ENCODE measurements at regions of chr11 and their contacts with region 1.

Region 1: DNA sequence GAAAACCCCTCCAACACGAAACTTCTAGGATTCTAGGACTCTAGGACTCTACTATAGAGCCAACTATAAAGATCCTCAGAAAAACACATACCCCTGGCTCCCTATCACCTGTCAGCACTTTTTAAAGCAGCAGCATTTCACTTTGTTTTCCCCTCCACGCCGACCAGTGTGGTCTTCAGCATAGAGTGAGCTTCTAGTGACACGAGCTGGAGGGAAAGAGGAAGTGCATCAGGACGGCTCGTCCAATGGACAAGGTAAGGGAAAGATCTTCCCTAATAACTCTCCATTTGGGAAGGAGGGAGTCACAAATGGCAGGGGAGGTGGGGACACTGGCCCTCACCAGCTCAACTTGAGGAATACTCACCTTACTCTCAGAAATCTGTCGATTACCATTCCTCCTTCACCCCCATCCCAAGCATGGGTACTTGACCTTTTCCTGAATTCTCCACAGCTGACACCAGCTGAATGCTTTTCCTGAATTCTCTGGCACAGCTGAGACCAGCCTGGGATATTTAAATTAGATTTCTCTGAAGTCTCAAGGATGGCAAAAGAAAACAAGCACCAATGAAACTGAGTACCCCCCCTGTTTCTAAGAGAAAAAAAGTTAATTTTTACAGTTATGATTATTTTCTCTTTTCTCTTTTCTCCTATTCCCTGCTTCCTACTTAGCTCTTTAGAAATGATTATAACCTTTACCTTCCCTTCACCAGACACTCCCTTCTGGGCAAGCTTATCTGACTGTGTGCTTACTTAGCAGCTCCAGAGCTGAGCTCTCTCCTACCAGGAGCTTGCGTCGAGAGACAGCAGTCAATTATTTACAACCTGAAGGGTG is 33.3 kb upstream of the NNMT start:
- DNase-seq: peak; percentile 55
- ATAC-seq: peak; percentile 63
- H3K4me3 Mint-ChIP-seq: no peak overlapping the region
- H3K27ac Mint-ChIP-seq: no peak overlapping the region
- H3K4me1 Mint-ChIP-seq: peaks cover 24% of the 10 kb centered on the region
- H3K27me3 Mint-ChIP-seq: peaks cover 2% of the 10 kb centered on the region

Region 2: GRCh38 chr11:113896156-113896879 is 366.6 kb before region 1 on chr11:
- CTCF ChIA-PET with region 1: interaction called, 133 read pairs
- POLR2A ChIA-PET with region 1: no interaction called
- DNase-seq: peak; percentile 55
- ATAC-seq: peak; percentile 73
- H3K4me3 Mint-ChIP-seq: no peak overlapping the region
- H3K27ac Mint-ChIP-seq: no peak overlapping the region
- H3K4me1 Mint-ChIP-seq: peaks cover 2% of the 10 kb centered on the region
- H3K27me3 Mint-ChIP-seq: peaks cover 3% of the 10 kb centered on the region

Region 3: DNA sequence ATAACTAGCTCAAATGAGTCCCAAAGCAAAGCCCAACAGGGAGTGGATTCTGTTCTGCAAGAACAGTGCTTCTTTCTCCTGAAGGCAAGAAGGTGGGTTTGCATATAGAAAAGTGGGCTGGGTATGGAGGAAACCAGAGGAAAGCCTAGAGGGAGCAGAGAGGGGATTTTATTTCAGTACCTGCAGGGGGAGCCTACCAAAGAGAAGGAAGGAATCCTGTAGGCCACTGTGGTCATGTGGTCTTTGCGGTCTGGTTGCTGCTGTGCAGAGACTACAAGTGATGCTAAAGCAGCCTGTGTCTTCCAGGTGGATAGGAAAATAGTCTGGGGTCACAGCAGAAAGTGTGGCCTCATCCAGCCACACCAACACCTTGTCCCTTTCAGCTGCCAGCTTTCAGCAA is 236.5 kb before region 1 on chr11:
- CTCF ChIA-PET with region 1: interaction called, 98 read pairs
- POLR2A ChIA-PET with region 1: no interaction called
- DNase-seq: peak; percentile 76
- ATAC-seq: peak; percentile 92
- H3K4me3 Mint-ChIP-seq: no peak overlapping the region
- H3K27ac Mint-ChIP-seq: no peak overlapping the region
- H3K4me1 Mint-ChIP-seq: peaks cover 10% of the 10 kb centered on the region
- H3K27me3 Mint-ChIP-seq: peaks cover 26% of the 10 kb centered on the region

Region 4: GRCh38 chr11:114059278-114059983 is 203.5 kb before region 1 on chr11 and contains the start of gene ZBTB16:
- CTCF ChIA-PET with region 1: interaction called, 23 read pairs
- POLR2A ChIA-PET with region 1: no interaction called
- DNase-seq: peak; percentile 70
- ATAC-seq: peak; percentile 58
- H3K4me3 Mint-ChIP-seq: peak within 1 kb of the TSS; percentile 83
- H3K27ac Mint-ChIP-seq: peak within 1 kb of the TSS; percentile 72
- H3K4me1 Mint-ChIP-seq: peaks cover 21% of the 10 kb centered on the region
- H3K27me3 Mint-ChIP-seq: peaks cover 53% of the 10 kb centered on the region
- total RNA-seq, gene ZBTB16: 16.3 to 16.4 TPM

Region 5: GRCh38 chr11:114121804-114122504 is 140.9 kb before region 1 on chr11:
- CTCF ChIA-PET with region 1: no interaction called
- POLR2A ChIA-PET with region 1: no interaction called
- DNase-seq: no peak
- ATAC-seq: no peak
- H3K4me3 Mint-ChIP-seq: no peak overlapping the region
- H3K27ac Mint-ChIP-seq: no peak overlapping the region
- H3K4me1 Mint-ChIP-seq: peaks cover 4% of the 10 kb centered on the region
- H3K27me3 Mint-ChIP-seq: peaks cover 18% of the 10 kb centered on the region

Region 6: DNA sequence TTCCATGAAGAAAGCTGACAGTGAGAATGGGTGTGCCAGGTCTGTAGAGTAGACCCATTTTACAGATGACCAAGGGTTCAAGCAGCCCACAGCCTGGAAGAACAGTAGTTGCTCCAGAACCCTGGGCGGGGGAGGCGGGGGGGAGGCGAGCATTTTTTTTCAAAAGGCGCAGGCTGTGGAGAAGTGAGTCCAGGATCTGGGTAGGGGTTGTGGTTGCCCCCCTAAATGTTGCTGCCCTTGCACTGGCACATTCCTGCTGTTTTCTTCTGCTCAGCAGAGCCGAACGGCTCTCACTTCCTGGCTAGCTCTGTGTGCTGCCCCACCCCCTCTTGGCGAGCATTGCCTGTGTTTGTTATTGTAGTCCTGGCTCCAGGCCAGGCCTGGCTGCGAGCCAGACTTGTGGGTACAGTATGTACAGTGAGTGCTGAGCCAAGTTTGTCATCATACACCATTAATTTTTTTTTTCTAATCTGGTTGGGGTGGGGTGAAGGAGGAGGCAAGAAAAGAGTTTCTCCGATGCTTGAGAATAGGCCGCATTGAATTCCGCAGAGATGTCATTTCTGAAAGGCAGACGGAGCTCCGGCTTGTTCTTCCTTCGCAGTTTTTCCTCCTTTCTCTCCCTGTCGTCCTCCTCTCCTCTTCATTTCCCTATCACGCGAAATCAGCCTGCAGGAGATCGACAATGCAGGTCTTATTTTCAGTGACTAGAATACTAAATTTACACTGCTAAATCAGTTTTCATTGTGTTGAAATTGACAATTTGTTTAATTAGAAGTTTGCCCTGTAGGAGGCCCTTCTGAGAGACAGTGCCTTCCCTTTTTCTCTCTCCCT is 102.9 kb before region 1 on chr11:
- CTCF ChIA-PET with region 1: interaction called, 25 read pairs
- POLR2A ChIA-PET with region 1: no interaction called
- DNase-seq: peak; percentile 97
- ATAC-seq: peak; percentile 96
- H3K4me3 Mint-ChIP-seq: peak overlapping the region; percentile 58
- H3K27ac Mint-ChIP-seq: peak overlapping the region; percentile 87
- H3K4me1 Mint-ChIP-seq: peaks cover 76% of the 10 kb centered on the region
- H3K27me3 Mint-ChIP-seq: no peaks in the 10 kb centered on the region

Region 7: DNA sequence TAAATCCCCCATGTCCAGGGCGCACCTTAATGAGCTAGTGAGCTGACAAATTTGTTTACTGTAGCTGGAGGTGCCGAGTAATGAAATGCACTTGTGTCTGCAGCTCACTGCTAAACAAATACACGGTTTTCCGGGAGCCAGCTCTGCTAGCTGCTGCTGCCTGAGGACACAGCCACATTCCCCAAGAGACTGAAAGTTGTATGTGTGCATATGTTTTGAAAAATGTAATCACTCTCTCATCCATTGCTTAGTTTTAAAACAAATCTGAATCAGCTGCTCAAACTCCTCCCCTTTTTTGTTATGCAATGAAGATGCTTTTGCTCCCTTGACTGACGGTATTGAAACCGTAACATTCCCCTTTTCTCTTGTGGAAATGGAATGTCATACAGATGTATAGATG is 29.1 kb before region 1 on chr11:
- CTCF ChIA-PET with region 1: interaction called, 37 read pairs
- POLR2A ChIA-PET with region 1: no interaction called
- DNase-seq: no peak
- ATAC-seq: no peak
- H3K4me3 Mint-ChIP-seq: no peak overlapping the region
- H3K27ac Mint-ChIP-seq: no peak overlapping the region
- H3K4me1 Mint-ChIP-seq: no peaks in the 10 kb centered on the region
- H3K27me3 Mint-ChIP-seq: peaks cover 36% of the 10 kb centered on the region

Region 8: GRCh38 chr11:114384487-114384886 is 121.6 kb after region 1 on chr11:
- CTCF ChIA-PET with region 1: no interaction called
- POLR2A ChIA-PET with region 1: no interaction called
- DNase-seq: no peak
- ATAC-seq: no peak
- H3K4me3 Mint-ChIP-seq: no peak overlapping the region
- H3K27ac Mint-ChIP-seq: no peak overlapping the region
- H3K4me1 Mint-ChIP-seq: no peaks in the 10 kb centered on the region
- H3K27me3 Mint-ChIP-seq: peaks cover 20% of the 10 kb centered on the region

Measured in activated CD8-positive, alpha-beta T cell treated with anti-CD3 and anti-CD28 coated beads, Interleukin-2, amount 10 ng/mL, durations not matched to agents 7 days and 5 days (primary cell).